Pancreas (tissue), 10 donors: ENCODE measurements at regions of chr1 and their contacts with region 1.

Region 1: GRCh38 chr1:64811131-64811530 is 66.3 kb downstream of the RAVER2 start:
- DNase-seq: no peak
- ATAC-seq: no peak
- H3K4me3 ChIP-seq: no peak overlapping the region
- H3K27ac ChIP-seq: no peak overlapping the region
- H3K4me1 ChIP-seq: no peaks in the 10 kb centered on the region
- H3K27me3 ChIP-seq: no peaks in the 10 kb centered on the region
- CTCF ChIP-seq: no peak

Region 2: DNA sequence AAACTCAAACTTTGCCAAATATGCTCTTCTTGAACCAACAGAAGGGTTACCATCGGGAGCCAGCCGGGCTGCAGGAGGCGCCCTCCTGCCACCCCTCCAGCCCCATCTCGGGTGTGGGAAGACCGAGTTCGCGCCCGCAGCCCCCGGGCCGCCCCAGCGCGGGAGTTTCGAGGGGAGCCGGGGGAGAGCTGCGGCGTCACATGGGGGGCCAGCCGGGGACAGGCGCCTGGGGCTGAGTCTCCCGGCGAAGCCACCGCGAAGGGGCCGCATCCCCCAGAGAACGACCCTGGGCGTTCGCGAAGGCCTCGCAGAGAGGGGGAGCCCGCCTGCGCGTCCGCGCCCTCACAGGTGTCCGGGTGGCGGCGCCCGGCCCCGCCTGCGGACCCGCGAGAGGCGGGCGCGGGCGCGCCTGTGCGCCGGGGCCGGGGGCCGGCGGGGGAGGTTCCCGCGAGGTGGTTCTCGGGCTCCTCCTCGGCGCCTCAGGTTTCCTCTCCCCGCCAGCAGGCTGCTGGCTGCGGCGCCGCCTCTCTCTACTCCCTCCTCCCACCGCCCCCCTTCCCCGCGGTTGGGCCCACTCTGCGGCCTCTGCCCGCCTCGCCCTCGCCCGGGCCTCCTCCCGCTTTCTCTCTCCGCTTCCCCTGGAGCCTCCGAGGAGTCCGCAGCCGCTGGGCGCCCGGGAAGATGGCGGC is 66.5 kb before region 1 on chr1 and contains the start of gene RAVER2:
- intact Hi-C with region 1: loop called in 1 of 3 experiments (anchors 10 kb)
- DNase-seq: peak; percentile 80 to 90 (median 82)
- ATAC-seq: peak; percentile 86 to 90 (median 89)
- H3K4me3 ChIP-seq: peak within 1 kb of the TSS; percentile 54 to 95 (median 86)
- H3K27ac ChIP-seq: peak within 1 kb of the TSS; percentile 66 to 74 (median 70)
- H3K4me1 ChIP-seq: peaks cover 0 to 4% (median 0%) of the 10 kb centered on the region in 3 donors
- H3K27me3 ChIP-seq: no peaks in the 10 kb centered on the region
- CTCF ChIP-seq: peak in 1 of 4 donors; percentile 26
- total RNA-seq, gene RAVER2: 3.3 to 6.6 (median 4.8) TPM